ENCODE measurements at regions of chr9 and their contacts with region 1.

Region 1: GRCh38 chr9:83920927-83921707 is at the start of gene KIF27:
- DNase-seq: peak; percentile 99
- ATAC-seq: peak; percentile 94
- H3K4me3 Mint-ChIP-seq: peak within 1 kb of the TSS; percentile 83
- H3K27ac Mint-ChIP-seq: peak within 1 kb of the TSS; percentile 90
- H3K4me1 Mint-ChIP-seq: peaks cover 17% of the 10 kb centered on the region
- H3K27me3 Mint-ChIP-seq: no peaks in the 10 kb centered on the region
- CTCF ChIP-seq: peak; percentile 55
- total RNA-seq, gene KIF27: 2.6 to 3.4 TPM

Region 2: GRCh38 chr9:83707768-83708514 is 213.2 kb before region 1 on chr9 and contains the start of gene UBQLN1:
- CTCF ChIA-PET with region 1: no interaction called
- POLR2A ChIA-PET with region 1: interaction called, 6 read pairs
- intact Hi-C with region 1: loop called (anchors 10 kb)
- DNase-seq: peak; percentile 96
- ATAC-seq: peak; percentile 78
- H3K4me3 Mint-ChIP-seq: peak within 1 kb of the TSS; percentile 86
- H3K27ac Mint-ChIP-seq: peak within 1 kb of the TSS; percentile 98
- H3K4me1 Mint-ChIP-seq: peaks cover 34% of the 10 kb centered on the region
- H3K27me3 Mint-ChIP-seq: no peaks in the 10 kb centered on the region
- CTCF ChIP-seq: no peak
- total RNA-seq, gene UBQLN1: 80.1 to 92.9 TPM

Region 3: GRCh38 chr9:83980395-83981125 is 59.4 kb after region 1 on chr9 and contains the start of gene RMI1:
- CTCF ChIA-PET with region 1: interaction called, 3 read pairs
- POLR2A ChIA-PET with region 1: interaction called, 14 read pairs
- intact Hi-C with region 1: loop called (anchors 5 kb)
- DNase-seq: peak; percentile 100
- ATAC-seq: peak; percentile 84
- H3K4me3 Mint-ChIP-seq: peak within 1 kb of the TSS; percentile 97
- H3K27ac Mint-ChIP-seq: peak within 1 kb of the TSS; percentile 97
- H3K4me1 Mint-ChIP-seq: peaks cover 39% of the 10 kb centered on the region
- H3K27me3 Mint-ChIP-seq: no peaks in the 10 kb centered on the region
- CTCF ChIP-seq: no peak
- total RNA-seq, gene RMI1: 20.1 to 20.6 TPM

Region 4: DNA sequence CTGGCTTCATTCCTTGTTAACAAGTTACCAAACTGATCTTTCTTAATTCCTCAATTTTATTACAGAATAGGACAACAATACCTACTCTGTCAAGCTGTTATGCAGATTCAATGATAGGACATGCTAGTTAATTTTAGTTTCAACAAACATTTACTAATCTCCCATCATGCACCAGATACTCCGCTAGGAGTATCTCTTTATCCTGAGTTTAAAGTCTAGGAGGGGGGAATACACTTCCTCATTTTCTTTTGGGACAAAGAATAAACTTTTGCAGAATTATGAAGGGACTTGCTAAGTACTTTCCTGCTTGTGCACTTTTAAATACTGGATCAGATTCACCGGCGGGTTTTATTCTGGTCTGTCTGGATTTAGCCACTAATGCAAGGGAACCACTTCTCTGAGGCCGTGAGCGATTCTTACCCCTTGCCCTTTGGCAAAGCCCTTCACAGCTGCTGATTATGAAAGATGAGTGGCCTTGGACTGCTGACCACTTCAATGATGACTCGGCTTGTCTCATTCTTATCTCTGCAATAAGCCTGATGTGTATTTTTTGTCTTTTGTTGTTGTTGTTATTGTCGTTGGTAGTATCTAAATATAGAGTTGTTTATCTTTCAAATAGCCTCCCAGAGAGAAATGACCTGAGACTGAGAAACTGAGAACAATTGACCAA is 133.4 kb after region 1 on chr9:
- CTCF ChIA-PET with region 1: no interaction called
- POLR2A ChIA-PET with region 1: no interaction called
- intact Hi-C with region 1: no loop called
- DNase-seq: no peak
- ATAC-seq: no peak
- H3K4me3 Mint-ChIP-seq: no peak overlapping the region
- H3K27ac Mint-ChIP-seq: no peak overlapping the region
- H3K4me1 Mint-ChIP-seq: no peaks in the 10 kb centered on the region
- H3K27me3 Mint-ChIP-seq: peaks cover 4% of the 10 kb centered on the region
- CTCF ChIP-seq: no peak

Region 5: DNA sequence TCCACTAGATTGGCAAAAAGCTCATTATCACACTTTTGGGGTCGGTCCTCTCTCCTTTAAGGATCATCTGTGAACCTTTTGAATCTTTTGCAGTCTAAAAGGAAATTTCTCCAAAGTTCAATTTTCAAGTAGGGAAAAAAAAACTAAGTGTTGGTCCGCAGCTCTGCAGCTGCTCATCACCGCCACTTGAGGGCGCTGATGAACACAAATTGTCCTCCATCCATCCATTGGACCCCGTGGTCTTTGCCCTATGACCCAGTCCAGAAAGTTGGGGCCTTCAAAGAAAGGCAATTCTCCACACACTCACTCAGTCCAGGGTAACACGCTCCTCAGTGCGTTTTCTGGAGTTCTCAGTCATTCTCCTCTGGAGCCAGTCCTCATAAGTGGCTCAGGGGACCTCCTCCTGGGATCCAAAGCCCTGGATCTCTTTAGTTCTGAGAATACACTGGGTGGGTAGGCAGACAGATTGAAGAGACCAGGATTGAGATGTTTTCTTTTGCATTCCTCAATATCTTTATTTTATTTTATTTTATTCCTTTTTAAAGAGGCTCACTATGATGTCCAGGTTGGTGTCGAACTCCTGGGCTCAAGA is 483.1 kb after region 1 on chr9:
- CTCF ChIA-PET with region 1: no interaction called
- POLR2A ChIA-PET with region 1: no interaction called
- intact Hi-C with region 1: no loop called
- DNase-seq: peak; percentile 22
- ATAC-seq: peak; percentile 47
- H3K4me3 Mint-ChIP-seq: no peak overlapping the region
- H3K27ac Mint-ChIP-seq: no peak overlapping the region
- H3K4me1 Mint-ChIP-seq: no peaks in the 10 kb centered on the region
- H3K27me3 Mint-ChIP-seq: no peaks in the 10 kb centered on the region
- CTCF ChIP-seq: peak; percentile 60

Region 6: GRCh38 chr9:84450029-84450428 is 528.9 kb after region 1 on chr9:
- CTCF ChIA-PET with region 1: no interaction called
- POLR2A ChIA-PET with region 1: no interaction called
- intact Hi-C with region 1: no loop called
- DNase-seq: no peak
- ATAC-seq: no peak
- H3K4me3 Mint-ChIP-seq: no peak overlapping the region
- H3K27ac Mint-ChIP-seq: no peak overlapping the region
- H3K4me1 Mint-ChIP-seq: no peaks in the 10 kb centered on the region
- H3K27me3 Mint-ChIP-seq: no peaks in the 10 kb centered on the region
- CTCF ChIP-seq: no peak

Measured in activated CD8-positive, alpha-beta T cell treated with anti-CD3 and anti-CD28 coated beads for 36 hours (primary cell).